AG04450 (cell line): ENCODE measurements at regions of chr12 and their contacts with region 1.

Region 1: DNA sequence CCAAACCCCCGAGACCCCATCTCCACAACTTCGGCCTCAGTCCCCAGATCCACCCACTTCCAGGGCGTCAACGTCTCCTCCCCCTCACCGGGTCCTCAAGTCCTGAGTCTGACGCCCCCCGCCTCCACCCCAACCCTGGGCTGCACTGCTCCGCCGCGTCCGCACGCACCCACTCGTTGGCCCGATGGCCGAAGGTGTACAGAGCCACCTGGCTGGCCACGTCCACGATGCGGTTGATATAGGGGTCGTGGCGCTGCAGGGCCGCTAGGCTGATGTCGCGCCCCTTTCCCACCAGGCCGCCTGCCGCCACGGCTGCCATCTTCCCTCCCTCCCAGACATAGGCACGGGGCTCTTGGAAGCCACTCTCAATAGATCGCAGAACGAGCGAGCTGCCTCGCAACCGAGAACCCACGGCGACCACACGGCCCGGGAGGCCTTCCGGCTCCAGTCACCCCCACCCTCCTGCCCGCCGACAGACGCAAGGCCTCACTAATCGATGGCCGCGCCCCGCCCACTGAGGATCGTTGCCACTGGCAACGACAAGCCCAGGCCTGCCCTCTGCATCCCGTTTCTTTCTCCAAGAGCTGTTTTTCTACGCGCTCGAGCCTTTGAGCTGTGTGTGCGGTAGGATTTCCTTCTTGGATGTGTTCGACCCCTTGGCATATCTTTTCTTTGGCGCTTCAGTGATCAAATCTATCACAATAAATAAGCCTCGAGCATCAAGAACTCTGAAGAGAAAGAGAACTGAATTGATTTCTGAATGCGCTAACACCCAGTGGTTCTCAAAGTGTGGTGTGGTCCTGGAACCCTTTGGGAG is at the start of gene DCP1B:
- DNase-seq: peak; percentile 93
- H3K4me3 ChIP-seq: peak within 1 kb of the TSS; percentile 95
- H3K27ac ChIP-seq: peak within 1 kb of the TSS; percentile 88
- H3K27me3 ChIP-seq: no peaks in the 10 kb centered on the region
- CTCF ChIP-seq: no peak
- polyA plus RNA-seq, gene DCP1B: 29.1 and 32.9 TPM in 2 replicates

Region 2: GRCh38 chr12:1993341-1993740 is 11.0 kb before region 1 on chr12:
- CTCF ChIA-PET with region 1: interaction called, 3 read pairs
- POLR2A ChIA-PET with region 1: interaction called, 25 read pairs
- DNase-seq: peak; percentile 88
- H3K4me3 ChIP-seq: no peak overlapping the region
- H3K27ac ChIP-seq: no peak overlapping the region
- H3K27me3 ChIP-seq: no peaks in the 10 kb centered on the region
- CTCF ChIP-seq: no peak